Caco-2 (cell line): ENCODE measurements at regions of chr11 and their contacts with region 1.

Region 1: GRCh38 chr11:94623120-94623735 is 56.1 kb downstream of the PIWIL4 start:
- DNase-seq: peak; percentile 87 to 92
- H3K4me3 ChIP-seq: no peak overlapping the region
- H3K4me3 Mint-ChIP-seq: no peak overlapping the region
- H3K27ac Mint-ChIP-seq: no peak overlapping the region
- H3K4me1 ChIP-seq: no peaks in the 10 kb centered on the region
- H3K4me1 Mint-ChIP-seq: no peaks in the 10 kb centered on the region
- H3K27me3 ChIP-seq: no peaks in the 10 kb centered on the region
- H3K27me3 Mint-ChIP-seq: no peaks in the 10 kb centered on the region
- CTCF ChIP-seq: peak; percentile 99

Region 2: DNA sequence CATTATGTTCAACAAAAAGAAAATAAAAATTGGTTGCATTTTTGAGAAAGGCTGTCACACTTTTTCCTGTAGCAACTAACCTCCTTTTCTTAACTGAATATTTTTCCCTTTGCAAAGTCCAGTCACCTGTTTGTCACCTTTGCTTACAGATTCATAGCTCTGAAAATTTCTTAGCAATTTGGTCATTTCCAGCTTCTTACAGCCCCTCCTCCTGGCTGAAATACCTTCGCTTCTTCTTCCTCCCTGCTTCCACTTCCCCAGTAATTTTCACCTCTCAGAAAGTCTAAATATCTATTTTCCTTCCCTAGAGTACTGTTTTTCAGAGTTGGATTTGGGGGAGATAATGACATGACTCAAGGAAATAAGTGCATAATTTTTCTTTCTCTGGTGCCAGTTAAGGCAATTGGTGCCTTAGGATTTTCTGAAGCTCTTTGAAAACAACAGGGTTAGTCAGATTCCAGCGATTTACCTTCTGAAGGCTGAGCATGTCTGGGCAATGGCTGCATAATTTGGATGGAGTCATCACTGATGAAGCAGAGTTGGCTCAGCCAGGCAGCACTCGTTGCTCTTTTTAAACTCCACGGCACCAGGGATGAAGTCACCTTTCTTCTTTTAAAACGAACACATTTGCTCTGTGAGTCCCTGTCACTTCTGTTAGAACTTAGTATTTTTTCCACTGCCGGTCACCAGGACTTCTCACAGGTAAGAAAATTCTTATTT is 82.8 kb after region 1 on chr11:
- CTCF ChIA-PET with region 1: interaction called, 4 read pairs
- POLR2A ChIA-PET with region 1: no interaction called
- intact Hi-C with region 1: loop called (anchors 1 kb)
- DNase-seq: no peak
- H3K4me3 ChIP-seq: no peak overlapping the region
- H3K4me3 Mint-ChIP-seq: peak overlapping the region; percentile 34
- H3K27ac Mint-ChIP-seq: peak overlapping the region; percentile 63
- H3K4me1 ChIP-seq: peaks cover 36% of the 10 kb centered on the region
- H3K4me1 Mint-ChIP-seq: peaks cover 26% of the 10 kb centered on the region
- H3K27me3 ChIP-seq: no peaks in the 10 kb centered on the region
- H3K27me3 Mint-ChIP-seq: no peaks in the 10 kb centered on the region
- CTCF ChIP-seq: no peak

Region 3: GRCh38 chr11:94762208-94762607 is 139.0 kb after region 1 on chr11:
- CTCF ChIA-PET with region 1: interaction called, 24 read pairs
- POLR2A ChIA-PET with region 1: interaction called, 3 read pairs
- intact Hi-C with region 1: loop called (anchors 1 kb)
- DNase-seq: peak in 1 of 2 experiments; percentile 58
- H3K4me3 ChIP-seq: no peak overlapping the region
- H3K4me3 Mint-ChIP-seq: no peak overlapping the region
- H3K27ac Mint-ChIP-seq: no peak overlapping the region
- H3K4me1 ChIP-seq: peaks cover 31% of the 10 kb centered on the region
- H3K4me1 Mint-ChIP-seq: peaks cover 12% of the 10 kb centered on the region
- H3K27me3 ChIP-seq: no peaks in the 10 kb centered on the region
- H3K27me3 Mint-ChIP-seq: no peaks in the 10 kb centered on the region
- CTCF ChIP-seq: peak; percentile 49 to 73

Region 4: DNA sequence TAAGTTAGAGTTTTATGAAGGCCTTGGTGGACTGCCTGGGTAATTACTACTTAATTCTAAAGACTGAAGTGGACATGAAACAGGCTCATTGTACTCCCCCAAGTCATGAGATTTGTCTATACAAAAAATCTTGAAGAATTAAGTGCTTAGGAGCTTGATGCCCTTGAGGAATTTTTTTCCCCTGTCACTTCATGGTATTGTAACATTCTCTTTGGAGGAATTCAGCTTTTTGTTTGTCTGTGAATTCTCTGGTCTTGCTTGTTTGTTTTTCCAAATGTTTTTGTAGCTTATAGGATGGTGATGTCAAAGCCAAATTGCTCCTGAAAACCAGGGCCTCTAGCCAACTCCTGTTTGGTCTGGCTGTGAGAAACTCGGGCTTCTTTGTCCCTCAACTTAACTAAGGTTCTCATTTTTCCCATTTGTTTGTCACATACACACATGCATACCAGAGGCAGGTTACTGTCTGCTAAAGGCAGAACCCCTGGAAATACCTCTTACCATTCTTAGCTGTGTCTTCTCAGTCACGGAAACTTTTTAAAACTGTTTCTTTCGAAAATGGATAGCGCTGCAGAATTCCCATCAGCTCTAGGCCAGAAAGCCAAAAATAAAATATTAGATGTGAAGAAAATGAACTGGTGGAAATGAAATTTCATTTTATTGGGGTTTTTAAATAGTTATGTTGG is 211.8 kb after region 1 on chr11:
- CTCF ChIA-PET with region 1: interaction called, 9 read pairs
- POLR2A ChIA-PET with region 1: no interaction called
- intact Hi-C with region 1: loop called (anchors 1 kb)
- DNase-seq: no peak
- H3K4me3 ChIP-seq: no peak overlapping the region
- H3K4me3 Mint-ChIP-seq: no peak overlapping the region
- H3K27ac Mint-ChIP-seq: peak overlapping the region; percentile 87
- H3K4me1 ChIP-seq: peaks cover 63% of the 10 kb centered on the region
- H3K4me1 Mint-ChIP-seq: peaks cover 38% of the 10 kb centered on the region
- H3K27me3 ChIP-seq: no peaks in the 10 kb centered on the region
- H3K27me3 Mint-ChIP-seq: no peaks in the 10 kb centered on the region
- CTCF ChIP-seq: no peak

Region 5: DNA sequence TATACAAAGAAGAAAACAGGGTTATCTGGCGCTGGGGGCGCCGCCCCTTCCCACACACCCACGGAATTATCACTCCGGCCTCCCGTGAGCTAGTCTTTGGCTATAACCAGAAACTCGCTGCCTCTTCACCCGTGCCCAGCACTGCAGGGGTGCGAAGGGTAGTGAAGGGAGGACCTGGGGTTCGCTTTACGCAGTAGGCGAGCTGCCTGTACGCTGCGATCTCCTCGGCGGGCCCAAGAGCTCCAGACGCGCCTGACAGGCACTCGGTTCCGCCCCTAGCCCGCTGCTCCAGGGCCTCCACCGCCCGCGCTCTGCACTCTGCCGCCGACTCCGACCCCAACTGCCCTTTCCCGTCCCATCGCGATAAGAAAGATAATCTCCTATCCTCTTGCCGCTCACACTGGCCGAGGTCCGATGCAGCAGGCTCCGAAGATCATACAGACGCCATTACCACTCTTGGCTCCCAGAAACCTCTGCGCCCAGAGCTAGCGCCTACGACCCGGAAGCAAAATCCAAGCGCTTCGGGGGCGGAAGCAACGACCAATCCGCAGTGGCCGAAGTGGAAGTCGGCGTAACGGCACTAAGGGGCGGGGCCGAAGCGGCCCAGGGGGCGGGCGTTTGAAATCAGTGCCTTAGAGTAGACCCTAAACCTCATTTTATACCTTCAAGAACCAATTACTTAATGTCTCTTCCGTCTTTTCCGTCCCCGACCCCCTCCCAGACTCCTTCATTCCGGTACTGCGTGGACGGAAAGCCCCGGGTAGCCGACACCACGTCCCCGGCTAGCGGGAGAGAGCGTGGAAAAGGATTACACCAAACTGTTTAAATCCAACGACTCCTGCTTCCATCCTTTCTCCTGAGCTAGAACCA is 350.1 kb after region 1 on chr11 and contains the starts of genes CWC15 and KDM4D:
- CTCF ChIA-PET with region 1: interaction called, 31 read pairs
- POLR2A ChIA-PET with region 1: no interaction called
- intact Hi-C with region 1: loop called (anchors 1 kb)
- DNase-seq: peak; percentile 97
- H3K4me3 ChIP-seq: peak within 1 kb of the TSS; percentile 56
- H3K4me3 Mint-ChIP-seq: peak within 1 kb of the TSS; percentile 89
- H3K27ac Mint-ChIP-seq: peak within 1 kb of the TSS; percentile 94
- H3K4me1 ChIP-seq: peaks cover 9% of the 10 kb centered on the region; the same call in 1 of the 2 replicates
- H3K4me1 Mint-ChIP-seq: peaks cover 25% of the 10 kb centered on the region
- H3K27me3 ChIP-seq: no peaks in the 10 kb centered on the region
- H3K27me3 Mint-ChIP-seq: no peaks in the 10 kb centered on the region
- CTCF ChIP-seq: no peak
- total RNA-seq, gene CWC15: 137 and 144 TPM in 2 replicates
- total RNA-seq, gene KDM4D: 0.95 and 1.2 TPM in 2 replicates